GM12878 (cell line): ENCODE measurements at regions of chr2 and their contacts with region 1.

Region 1: GRCh38 chr2:8681786-8682692 is at the start of gene ID2:
- DNase-seq: peak; percentile 88
- ATAC-seq: peak; percentile 64
- H3K4me3 ChIP-seq: peak within 1 kb of the TSS; percentile 80
- H3K27ac ChIP-seq: peak within 1 kb of the TSS; percentile 71
- H3K4me1 ChIP-seq: peaks cover 23% of the 10 kb centered on the region
- H3K27me3 ChIP-seq: peaks cover 0 to 8% of the 10 kb centered on the region in 2 experiments; a peak in 1 of 4 replicates
- CTCF ChIP-seq: no peak
- EP300 ChIP-seq: no peak
- POLR2A ChIP-seq: peak; percentile 99
- RAD21 ChIP-seq: no peak
- polyA plus RNA-seq, gene ID2: 77.3 to 82.5 TPM

Region 2: DNA sequence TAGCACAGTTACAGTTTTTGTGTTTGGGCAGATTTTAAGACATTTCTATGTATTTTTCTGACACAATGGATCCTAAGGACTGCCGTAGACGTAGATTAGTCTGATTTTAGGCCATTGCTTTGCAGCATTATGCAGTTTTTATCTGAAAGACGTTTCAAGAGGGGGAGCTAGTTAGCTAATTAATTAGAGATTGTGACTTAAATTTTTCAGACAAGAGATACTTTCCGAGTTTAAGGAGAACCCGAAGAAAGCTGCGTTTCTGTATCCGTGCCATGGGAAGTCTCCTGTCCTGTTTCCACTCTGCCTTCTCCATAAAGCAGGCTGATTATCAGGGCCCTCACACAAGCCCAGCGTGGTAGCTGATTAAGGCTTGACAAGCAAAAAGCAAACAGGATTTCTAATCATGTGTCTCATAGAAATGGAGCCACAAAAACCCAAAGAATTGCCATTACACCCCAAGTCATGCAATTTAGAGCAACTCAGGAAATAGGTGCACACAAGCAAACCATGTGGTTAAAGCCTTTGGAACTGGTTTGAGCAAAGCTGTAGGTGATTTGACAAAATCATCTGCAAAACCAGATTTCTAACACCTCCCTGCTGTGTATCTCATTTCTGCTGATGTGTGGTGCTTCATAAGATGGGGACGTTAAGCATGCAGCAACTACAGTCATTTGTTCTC is 956.7 kb before region 1 on chr2:
- CTCF ChIA-PET with region 1: no interaction called
- POLR2A ChIA-PET with region 1: interaction called, 4 read pairs
- RAD21 ChIA-PET with region 1: interaction called, 5 read pairs
- SMC1A ChIA-PET with region 1: no interaction called
- in situ Hi-C with region 1: no loop called
- intact Hi-C with region 1: loop called (anchors 10 kb)
- DNase-seq: peak; percentile 73
- ATAC-seq: peak; percentile 51
- H3K4me3 ChIP-seq: no peak overlapping the region
- H3K27ac ChIP-seq: no peak overlapping the region; the same call in 1 of the 2 replicates
- H3K4me1 ChIP-seq: peaks cover 4% of the 10 kb centered on the region; the same call in 1 of the 2 replicates
- H3K27me3 ChIP-seq: no peaks in the 10 kb centered on the region; a peak in 1 of 4 replicates
- CTCF ChIP-seq: peak in 1 of 3 experiments; percentile 24; a peak in 1 of 6 replicates
- EP300 ChIP-seq: peak; percentile 63 to 68; a peak in 2 of 4 replicates
- POLR2A ChIP-seq: no peak
- RAD21 ChIP-seq: peak; percentile 27; the same call in 1 of the 2 replicates

Region 3: GRCh38 chr2:8277921-8278571 is 404.0 kb before region 1 on chr2:
- CTCF ChIA-PET with region 1: interaction called, 3 read pairs
- POLR2A ChIA-PET with region 1: interaction called, 3 read pairs
- RAD21 ChIA-PET with region 1: interaction called, 10 read pairs
- SMC1A ChIA-PET with region 1: no interaction called
- in situ Hi-C with region 1: no loop called
- intact Hi-C with region 1: no loop called
- DNase-seq: peak; percentile 56
- ATAC-seq: peak; percentile 95
- H3K4me3 ChIP-seq: peak overlapping the region; percentile 40; the same call in 1 of the 2 replicates
- H3K27ac ChIP-seq: peak overlapping the region; percentile 56
- H3K4me1 ChIP-seq: peaks cover 17% of the 10 kb centered on the region
- H3K27me3 ChIP-seq: no peaks in the 10 kb centered on the region
- CTCF ChIP-seq: no peak
- EP300 ChIP-seq: peak in 1 of 2 experiments; percentile 58; a peak in 1 of 4 replicates
- POLR2A ChIP-seq: no peak
- RAD21 ChIP-seq: no peak

Region 4: DNA sequence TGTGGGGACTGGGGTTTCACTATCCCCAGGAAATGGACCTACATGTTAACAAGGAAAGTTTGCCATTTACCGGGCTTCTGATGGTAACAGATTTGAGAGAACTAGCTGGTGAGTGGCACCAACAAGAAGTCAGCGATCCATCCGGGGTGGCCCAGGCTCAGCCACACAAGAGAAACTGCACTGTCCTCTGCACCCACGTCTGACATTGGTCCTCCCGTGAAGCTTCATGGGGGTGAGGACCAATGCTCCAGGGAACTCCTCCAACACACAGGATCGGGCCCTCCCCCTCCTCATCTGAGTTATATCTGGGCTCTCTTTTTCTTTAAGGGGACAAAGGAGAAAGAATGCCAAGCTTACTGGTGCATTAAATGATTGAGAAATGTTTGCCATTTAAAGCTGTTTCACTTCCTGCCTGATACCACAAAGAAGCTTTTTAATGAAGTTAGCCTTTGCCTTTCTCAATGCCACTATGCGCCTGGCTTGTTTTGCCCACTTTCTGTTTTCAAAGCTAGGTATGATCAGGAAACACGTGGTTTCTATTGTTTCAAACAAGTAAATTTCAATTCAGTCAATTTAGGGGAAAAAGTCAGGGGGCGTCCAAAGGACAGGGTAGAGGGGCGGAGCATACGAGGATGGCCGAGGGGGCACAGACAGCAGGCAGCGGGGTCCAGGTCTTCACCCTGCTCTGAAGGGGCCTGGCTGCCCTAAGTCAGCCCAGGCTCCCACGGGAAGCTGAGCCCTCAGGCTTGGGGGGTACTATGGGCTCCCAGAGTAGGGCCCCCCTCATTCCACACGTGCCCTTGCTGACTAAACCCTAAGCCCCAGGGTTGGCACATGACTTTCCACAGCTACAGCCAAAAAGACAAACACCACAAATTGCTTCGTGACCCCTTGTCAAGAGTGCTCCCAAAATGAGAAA is 204.2 kb before region 1 on chr2:
- CTCF ChIA-PET with region 1: interaction called, 10 read pairs
- POLR2A ChIA-PET with region 1: interaction called, 46 read pairs
- RAD21 ChIA-PET with region 1: interaction called, 66 read pairs
- SMC1A ChIA-PET with region 1: interaction called, 6 read pairs
- in situ Hi-C with region 1: no loop called
- intact Hi-C with region 1: no loop called
- DNase-seq: peak; percentile 95
- ATAC-seq: peak; percentile 52
- H3K4me3 ChIP-seq: peak overlapping the region; percentile 43; the same call in 1 of the 2 replicates
- H3K27ac ChIP-seq: peak overlapping the region; percentile 62
- H3K4me1 ChIP-seq: peaks cover 68% of the 10 kb centered on the region
- H3K27me3 ChIP-seq: no peaks in the 10 kb centered on the region
- CTCF ChIP-seq: no peak
- EP300 ChIP-seq: peak; percentile 94 to 96
- POLR2A ChIP-seq: no peak
- RAD21 ChIP-seq: no peak

Region 5: DNA sequence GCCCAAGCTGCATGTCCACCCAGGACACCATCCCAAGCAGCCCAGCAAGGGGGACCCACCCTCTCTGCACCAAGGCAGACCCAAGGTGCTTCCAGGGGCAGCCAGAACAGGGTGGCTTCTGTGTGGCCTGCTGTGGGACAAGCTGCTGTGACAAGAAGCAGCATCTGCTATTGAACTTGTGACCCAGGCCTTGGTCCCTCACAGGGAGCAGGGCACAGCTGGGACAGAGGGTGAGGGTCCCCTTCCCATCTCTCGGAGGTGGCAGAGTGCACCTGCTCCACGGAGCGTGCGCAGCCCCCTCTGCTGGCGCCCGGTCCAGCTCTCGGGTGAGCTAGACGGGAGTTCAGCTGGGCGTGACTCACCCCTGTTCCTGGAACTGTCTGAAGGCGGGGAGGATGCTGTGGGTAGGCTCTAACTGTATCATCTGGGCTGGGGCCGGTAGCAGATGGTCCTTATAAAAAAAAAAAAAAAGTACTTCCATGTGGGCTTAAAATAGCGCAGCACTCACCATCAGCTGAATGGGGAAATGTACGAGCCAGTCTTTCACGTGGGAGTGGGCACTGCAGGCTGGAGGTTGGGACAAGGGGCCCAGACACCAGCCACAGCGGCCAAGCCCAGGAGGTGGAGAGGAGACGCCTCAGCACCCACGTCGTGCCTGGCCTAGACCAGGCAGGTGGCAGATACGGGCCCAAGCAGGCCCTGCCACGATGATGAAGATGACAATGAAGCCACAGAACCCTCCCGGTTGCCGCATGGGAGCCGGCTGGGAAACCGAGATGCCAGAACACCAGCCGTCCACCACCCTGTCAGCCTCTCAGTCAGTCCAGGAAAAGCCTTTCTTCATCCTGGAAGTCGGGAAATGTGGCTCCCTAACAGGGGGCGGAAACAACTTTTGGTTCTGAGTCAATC is 137.0 kb before region 1 on chr2:
- CTCF ChIA-PET with region 1: interaction called, 22 read pairs
- POLR2A ChIA-PET with region 1: interaction called, 42 read pairs
- RAD21 ChIA-PET with region 1: interaction called, 103 read pairs
- SMC1A ChIA-PET with region 1: interaction called, 15 read pairs
- in situ Hi-C with region 1: no loop called
- intact Hi-C with region 1: loop called (anchors 1 kb)
- DNase-seq: peak; percentile 62
- ATAC-seq: peak; percentile 71
- H3K4me3 ChIP-seq: no peak overlapping the region
- H3K27ac ChIP-seq: peak overlapping the region; percentile 95
- H3K4me1 ChIP-seq: peaks cover 56% of the 10 kb centered on the region
- H3K27me3 ChIP-seq: no peaks in the 10 kb centered on the region
- CTCF ChIP-seq: peak; percentile 44 to 66 (median 54); a peak in 5 of 6 replicates
- EP300 ChIP-seq: peak; percentile 8 to 64; a peak in 2 of 4 replicates
- POLR2A ChIP-seq: peak; percentile 29
- RAD21 ChIP-seq: peak; percentile 60

Region 6: DNA sequence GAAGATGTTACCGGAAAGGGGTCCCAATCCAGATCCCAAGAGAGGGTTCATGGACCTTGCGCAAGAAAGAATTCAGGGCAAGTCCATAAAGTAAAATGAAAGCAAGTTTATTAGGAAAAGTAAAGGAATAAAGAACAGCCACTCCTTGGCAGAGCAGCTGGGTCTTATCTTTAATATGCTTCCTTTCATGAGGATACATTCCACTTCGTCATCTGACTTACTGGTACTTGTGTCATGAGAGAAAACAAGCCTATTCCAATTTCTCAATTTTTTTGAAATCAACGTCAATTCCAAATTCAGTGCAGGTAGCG is 61.0 kb before region 1 on chr2:
- CTCF ChIA-PET with region 1: no interaction called
- POLR2A ChIA-PET with region 1: interaction called, 4 read pairs
- RAD21 ChIA-PET with region 1: interaction called, 23 read pairs
- SMC1A ChIA-PET with region 1: interaction called, 6 read pairs
- in situ Hi-C with region 1: no loop called
- intact Hi-C with region 1: no loop called
- DNase-seq: no peak
- ATAC-seq: no peak
- H3K4me3 ChIP-seq: no peak overlapping the region
- H3K27ac ChIP-seq: no peak overlapping the region
- H3K4me1 ChIP-seq: no peaks in the 10 kb centered on the region
- H3K27me3 ChIP-seq: peaks cover 0 to 8% of the 10 kb centered on the region in 2 experiments; a peak in 2 of 4 replicates
- CTCF ChIP-seq: no peak
- EP300 ChIP-seq: no peak
- POLR2A ChIP-seq: no peak
- RAD21 ChIP-seq: no peak